ENCODE measurements at regions of chr10 and their contacts with region 1.

Region 1: DNA sequence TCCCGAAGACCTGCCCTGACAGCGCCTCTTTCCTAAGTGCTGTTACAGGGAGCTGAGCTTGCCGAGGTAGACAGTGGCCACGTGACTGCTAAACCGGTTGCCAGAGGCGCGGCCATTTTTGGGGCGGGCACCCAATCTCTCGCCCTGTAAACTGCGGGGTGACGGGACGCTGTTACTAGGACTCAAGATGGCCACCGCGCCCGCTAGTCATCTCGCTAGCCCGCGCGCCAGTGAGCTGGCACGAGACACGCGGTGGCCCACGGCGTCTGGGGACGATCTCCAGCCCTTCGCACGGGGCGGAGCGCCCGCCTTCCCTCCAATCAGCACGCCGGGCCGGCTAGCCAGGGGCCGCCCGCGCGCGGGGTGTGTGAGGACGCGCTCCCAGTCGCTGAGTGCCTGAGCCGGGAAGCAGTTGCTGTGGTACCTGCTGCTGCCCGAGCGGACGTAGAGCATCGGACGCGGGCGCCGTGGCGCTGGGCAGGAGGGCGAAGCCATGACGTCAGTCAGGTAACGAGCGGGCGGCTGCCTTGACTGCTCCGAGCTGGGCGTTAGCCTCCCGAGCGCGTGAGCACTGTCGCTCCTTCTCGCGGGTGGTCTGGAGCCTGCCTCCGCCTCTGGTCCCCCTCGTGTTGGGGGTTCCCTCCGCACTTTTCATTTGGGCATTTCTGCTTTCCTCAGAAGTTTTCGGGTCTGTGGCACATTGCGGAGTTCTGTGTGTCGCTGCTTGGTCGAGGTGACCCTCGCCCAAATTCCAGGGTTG is 25.5 kb downstream of the ADK start:
- DNase-seq: peak; percentile 98
- ATAC-seq: peak; percentile 94
- H3K4me3 Mint-ChIP-seq: peak overlapping the region; percentile 91
- H3K27ac Mint-ChIP-seq: peak overlapping the region; percentile 96
- H3K4me1 Mint-ChIP-seq: peaks cover 38% of the 10 kb centered on the region
- H3K27me3 Mint-ChIP-seq: no peaks in the 10 kb centered on the region

Region 2: GRCh38 chr10:73953665-73954064 is 222.9 kb before region 1 on chr10:
- CTCF ChIA-PET with region 1: no interaction called
- DNase-seq: no peak
- ATAC-seq: no peak
- H3K4me3 Mint-ChIP-seq: no peak overlapping the region
- H3K27ac Mint-ChIP-seq: no peak overlapping the region
- H3K4me1 Mint-ChIP-seq: peaks cover 29% of the 10 kb centered on the region
- H3K27me3 Mint-ChIP-seq: peaks cover 2% of the 10 kb centered on the region

Region 3: GRCh38 chr10:74113546-74113945 is 63.0 kb before region 1 on chr10:
- CTCF ChIA-PET with region 1: no interaction called
- DNase-seq: no peak
- ATAC-seq: no peak
- H3K4me3 Mint-ChIP-seq: no peak overlapping the region
- H3K27ac Mint-ChIP-seq: no peak overlapping the region
- H3K4me1 Mint-ChIP-seq: peaks cover 10% of the 10 kb centered on the region
- H3K27me3 Mint-ChIP-seq: no peaks in the 10 kb centered on the region

Region 4: DNA sequence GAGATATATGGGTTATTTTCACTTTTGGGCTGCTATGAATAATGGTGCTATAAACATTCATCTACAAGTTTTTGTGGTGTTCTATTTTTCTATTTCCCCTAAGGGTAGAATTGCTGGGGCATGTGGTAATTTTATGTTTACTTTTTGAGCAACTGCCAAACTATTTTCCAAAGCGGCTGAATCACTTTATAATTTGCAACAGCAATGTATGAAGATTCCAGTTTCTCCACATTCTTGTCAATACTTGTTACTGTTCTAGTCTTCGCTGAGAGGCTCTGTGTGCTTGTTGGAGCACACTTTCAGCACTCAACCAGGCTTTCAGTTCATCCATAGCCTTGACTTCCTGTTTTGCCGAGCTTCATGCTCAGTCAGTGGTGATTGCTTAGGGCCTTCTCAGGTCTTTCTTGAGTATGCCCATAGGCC is 13.4 kb after region 1 on chr10:
- CTCF ChIA-PET with region 1: interaction called, 12 read pairs
- DNase-seq: peak; percentile 55
- ATAC-seq: peak; percentile 88
- H3K4me3 Mint-ChIP-seq: peak overlapping the region; percentile 61
- H3K27ac Mint-ChIP-seq: peak overlapping the region; percentile 98
- H3K4me1 Mint-ChIP-seq: peaks cover 56% of the 10 kb centered on the region
- H3K27me3 Mint-ChIP-seq: no peaks in the 10 kb centered on the region

Region 5: GRCh38 chr10:74234569-74234968 is 58.0 kb after region 1 on chr10:
- CTCF ChIA-PET with region 1: no interaction called
- DNase-seq: no peak
- ATAC-seq: no peak
- H3K4me3 Mint-ChIP-seq: no peak overlapping the region
- H3K27ac Mint-ChIP-seq: no peak overlapping the region
- H3K4me1 Mint-ChIP-seq: no peaks in the 10 kb centered on the region
- H3K27me3 Mint-ChIP-seq: no peaks in the 10 kb centered on the region

Measured in activated CD8-positive, alpha-beta memory T cell treated with anti-CD3 and anti-CD28 coated beads, Interleukin-2, amount 10 ng/mL, durations not matched to agents 7 days and 5 days (primary cell).